Mammary epithelial cell (primary cell): ENCODE measurements at regions of chr4 and their contacts with region 1.

Region 1: GRCh38 chr4:185471235-185472102 is at the start of gene CCDC110:
- DNase-seq: peak; percentile 81
- H3K4me3 ChIP-seq: peak within 1 kb of the TSS; percentile 71 to 86 (median 82)
- H3K27ac ChIP-seq: no peak within 1 kb of the TSS
- H3K4me1 ChIP-seq: peaks cover 10% of the 10 kb centered on the region
- H3K27me3 ChIP-seq: peaks cover 5% of the 10 kb centered on the region
- CTCF ChIP-seq: peak in 1 of 2 donors; percentile 46
- total RNA-seq, gene CCDC110: 0.17 to 0.59 TPM

Region 2: GRCh38 chr4:185209031-185209851 is 262.2 kb before region 1 on chr4 and contains the start of gene SNX25:
- CTCF ChIA-PET with region 1: no interaction called
- dilution Hi-C with region 1: no loop called
- in situ Hi-C with region 1: no loop called
- intact Hi-C with region 1: loop called (anchors 2 kb)
- DNase-seq: peak; percentile 79
- H3K4me3 ChIP-seq: peak within 1 kb of the TSS; percentile 35 to 78 (median 73)
- H3K27ac ChIP-seq: peak within 1 kb of the TSS; percentile 66
- H3K4me1 ChIP-seq: peaks cover 11% of the 10 kb centered on the region
- H3K27me3 ChIP-seq: no peaks in the 10 kb centered on the region
- CTCF ChIP-seq: no peak
- total RNA-seq, gene SNX25: 15.3 to 24.0 TPM

Region 3: DNA sequence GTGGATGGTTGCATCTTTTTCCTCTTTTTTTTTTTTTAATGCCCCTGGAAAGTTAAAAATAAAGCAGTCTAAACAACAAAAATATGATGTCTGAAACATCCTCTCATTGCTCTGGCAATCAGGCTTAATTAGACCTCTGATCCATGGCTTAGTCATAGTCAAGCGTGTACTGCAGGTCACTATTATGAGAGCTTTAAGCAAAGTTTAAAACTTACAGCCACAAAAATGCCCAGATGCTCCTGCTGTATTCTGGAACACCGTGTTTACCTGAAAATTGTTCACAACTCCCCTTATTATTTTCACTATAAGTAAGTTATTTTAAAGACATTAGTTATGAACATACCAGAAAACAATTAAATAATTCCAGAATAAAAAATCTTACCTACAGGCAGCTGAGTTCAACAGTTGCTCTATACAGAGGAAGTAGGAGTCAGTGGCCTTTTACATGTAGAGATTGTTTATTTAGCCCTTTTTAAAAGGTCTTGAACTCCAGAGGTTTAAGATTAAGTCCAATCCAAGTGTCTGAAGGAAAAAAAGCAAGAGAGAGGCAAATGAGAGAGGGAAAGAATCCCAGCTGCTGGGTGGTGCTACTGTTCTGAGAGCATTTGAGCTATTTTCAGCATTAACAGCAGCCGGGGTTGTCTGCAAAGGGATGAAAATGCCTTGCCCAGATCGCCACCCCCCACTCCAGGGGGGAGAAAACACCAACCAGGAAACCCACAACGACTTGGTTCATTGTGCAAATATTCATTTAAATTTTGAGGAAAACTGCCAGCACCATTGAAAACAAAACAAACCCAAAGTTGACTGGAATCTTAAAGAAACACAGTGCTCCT is 303.6 kb after region 1 on chr4:
- CTCF ChIA-PET with region 1: no interaction called
- dilution Hi-C with region 1: no loop called
- in situ Hi-C with region 1: no loop called
- intact Hi-C with region 1: no loop called
- DNase-seq: no peak
- H3K4me3 ChIP-seq: no peak overlapping the region
- H3K27ac ChIP-seq: no peak overlapping the region
- H3K4me1 ChIP-seq: peaks cover 6% of the 10 kb centered on the region
- H3K27me3 ChIP-seq: no peaks in the 10 kb centered on the region
- CTCF ChIP-seq: no peak

Region 4: DNA sequence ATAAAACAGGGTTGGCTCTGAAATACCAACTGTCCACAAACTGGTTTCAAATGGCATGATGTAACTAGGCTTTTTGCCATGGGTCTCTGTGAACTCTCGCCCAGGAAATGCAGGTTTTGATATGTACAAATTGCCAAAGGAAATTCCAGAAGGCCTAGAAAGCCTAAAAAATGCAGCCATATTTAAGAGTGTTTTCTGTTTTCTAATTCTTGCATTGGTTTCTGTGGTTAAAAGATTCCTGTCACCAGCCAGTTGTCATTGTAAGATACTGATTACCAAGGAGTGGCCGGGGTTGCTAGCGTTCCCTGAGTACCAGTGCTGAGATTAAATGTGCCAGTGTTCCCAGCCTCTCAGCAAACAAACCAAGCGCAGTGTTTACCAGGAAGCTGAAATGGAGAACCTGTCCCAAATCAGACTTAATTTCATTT is 394.4 kb after region 1 on chr4:
- CTCF ChIA-PET with region 1: no interaction called
- dilution Hi-C with region 1: no loop called
- in situ Hi-C with region 1: no loop called
- intact Hi-C with region 1: no loop called
- DNase-seq: peak; percentile 79
- H3K4me3 ChIP-seq: no peak overlapping the region
- H3K27ac ChIP-seq: peak overlapping the region; percentile 25
- H3K4me1 ChIP-seq: peaks cover 11% of the 10 kb centered on the region
- H3K27me3 ChIP-seq: no peaks in the 10 kb centered on the region
- CTCF ChIP-seq: no peak